GM18951 (cell line): ENCODE measurements at regions of chr11 and their contacts with region 1.

Region 1: GRCh38 chr11:34926101-34926830 is 9.8 kb downstream of the PDHX start:
- POLR2A ChIP-seq: no peak

Region 2: GRCh38 chr11:35030716-35031213 is 104.5 kb after region 1 on chr11:
- in situ Hi-C with region 1: no loop called
- POLR2A ChIP-seq: no peak

Region 3: DNA sequence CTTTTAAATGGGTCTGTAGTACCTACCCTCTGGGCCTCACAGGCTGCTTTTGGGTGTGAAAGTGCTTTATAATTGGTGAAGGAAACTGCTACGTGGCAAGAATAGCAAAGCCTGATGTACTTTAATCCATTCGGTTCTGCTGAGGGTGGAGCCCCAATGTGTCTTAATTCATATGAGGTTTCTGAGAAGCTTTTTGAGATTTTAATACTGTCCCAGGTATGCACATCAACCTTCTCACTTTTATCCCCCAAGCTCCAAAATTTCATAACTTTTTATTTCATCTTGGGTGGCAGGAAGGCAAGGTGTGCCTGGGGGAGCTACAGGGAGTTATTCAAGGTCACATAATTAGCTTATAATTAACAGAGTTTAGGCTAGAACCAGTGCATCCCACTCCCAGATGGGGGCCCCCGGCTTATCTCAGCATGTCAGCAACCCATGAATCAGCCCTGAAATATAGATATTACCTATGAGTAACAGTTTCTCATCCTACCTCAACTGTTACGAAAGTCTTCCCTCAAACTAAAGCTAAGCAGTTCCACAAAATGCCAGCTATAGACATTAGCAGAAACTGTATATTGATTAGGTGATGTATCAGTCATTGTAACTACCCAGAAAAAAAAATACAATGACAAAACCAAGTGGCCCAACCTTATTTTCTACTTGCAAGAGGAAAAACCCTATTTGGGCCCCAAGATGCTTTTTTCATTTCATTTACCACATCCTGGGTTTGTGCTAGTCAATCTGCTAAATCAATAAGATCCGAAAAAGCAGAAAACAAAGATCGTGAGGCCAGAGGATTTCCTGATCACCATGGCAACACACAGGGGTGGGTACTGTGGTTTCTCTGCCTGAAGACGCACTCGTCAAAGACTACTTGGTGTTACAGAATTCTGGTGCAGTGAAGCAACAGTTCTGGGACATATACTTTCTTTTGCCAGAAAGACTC is 239.4 kb after region 1 on chr11:
- in situ Hi-C with region 1: loop called (anchors 10 kb)
- POLR2A ChIP-seq: peak; percentile 33

Region 4: GRCh38 chr11:35373284-35373933 is 447.1 kb after region 1 on chr11:
- in situ Hi-C with region 1: loop called (anchors 10 kb)
- POLR2A ChIP-seq: no peak

Region 5: DNA sequence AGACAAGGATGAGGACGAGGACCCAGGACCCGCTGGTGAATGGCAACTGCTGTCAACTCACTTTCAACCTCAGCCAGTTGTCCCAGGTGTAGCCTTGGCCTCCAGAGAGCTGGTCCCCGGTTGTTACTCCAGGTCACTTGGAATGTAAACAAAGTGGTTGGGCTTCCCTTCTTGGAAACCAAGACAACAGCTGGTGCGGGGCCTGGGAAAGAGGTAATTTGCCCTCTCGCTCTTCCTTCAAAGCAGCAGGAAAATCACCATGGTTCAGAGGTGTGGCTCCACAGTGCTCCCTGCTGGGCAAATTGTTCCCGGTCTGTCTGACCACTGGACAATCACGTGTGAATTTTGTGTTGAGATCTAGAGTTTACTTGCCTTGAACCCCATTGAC is 478.1 kb after region 1 on chr11:
- in situ Hi-C with region 1: loop called (anchors 10 kb)
- POLR2A ChIP-seq: no peak

Region 6: GRCh38 chr11:35859301-35859700 is 933.0 kb after region 1 on chr11:
- in situ Hi-C with region 1: no loop called
- POLR2A ChIP-seq: no peak